Heart left ventricle (tissue), 16 donors: ENCODE measurements at regions of chr10 and their contacts with region 1.

Region 1: DNA sequence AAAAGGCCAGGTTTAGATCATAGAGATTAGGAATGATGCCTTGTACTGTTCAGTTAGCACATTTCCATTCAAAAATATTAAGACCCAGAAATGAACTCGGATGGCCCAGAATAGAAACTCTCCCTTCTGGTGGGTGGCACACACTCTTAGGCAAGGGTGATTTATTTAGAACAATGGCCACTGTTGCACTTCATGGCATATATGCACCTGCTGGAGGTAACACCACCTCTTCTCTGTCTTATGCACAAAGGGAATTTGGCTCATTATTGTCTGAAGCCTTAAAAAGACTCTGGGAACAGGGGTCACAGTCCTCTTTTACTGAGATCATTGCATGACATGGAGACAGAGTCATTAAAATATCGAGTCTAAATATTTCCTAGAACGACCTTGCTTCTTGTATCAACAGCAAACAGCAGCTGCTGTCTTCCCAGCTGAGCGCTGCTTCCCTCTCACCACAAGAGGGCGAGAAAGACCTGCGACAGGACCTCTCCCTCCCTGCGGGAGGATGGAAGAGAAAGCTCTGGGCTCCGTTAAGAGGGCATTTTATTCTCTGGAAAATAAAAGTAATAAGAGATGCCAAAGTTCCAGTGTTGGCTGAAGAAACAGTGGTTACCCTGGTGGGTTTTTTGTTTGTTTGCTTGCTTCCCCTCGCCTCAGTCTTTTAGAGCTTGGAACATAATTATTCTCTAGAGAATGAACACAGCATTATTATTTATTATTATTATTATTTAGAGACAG is 13.6 kb upstream of the BAMBI start:
- DNase-seq: peak; percentile 70 to 81 (median 74)
- ATAC-seq: peak; percentile 66 to 93 (median 88)
- H3K4me3 ChIP-seq: no peak overlapping the region
- H3K27ac ChIP-seq: no peak overlapping the region
- H3K4me1 ChIP-seq: peaks cover 0 to 16% (median 3%) of the 10 kb centered on the region in 12 donors
- H3K27me3 ChIP-seq: peaks cover 0 to 20% (median 0%) of the 10 kb centered on the region in 9 donors
- CTCF ChIP-seq: peak; percentile 86 to 98 (median 96)
- POLR2A ChIP-seq: no peak

Region 2: GRCh38 chr10:28250782-28251181 is 413.0 kb before region 1 on chr10:
- intact Hi-C with region 1: no loop called
- DNase-seq: no peak
- ATAC-seq: peak in 2 of 4 donors; percentile 40 to 42
- H3K4me3 ChIP-seq: no peak overlapping the region
- H3K27ac ChIP-seq: no peak overlapping the region
- H3K4me1 ChIP-seq: peaks cover 0 to 25% (median 1%) of the 10 kb centered on the region in 12 donors
- H3K27me3 ChIP-seq: peaks cover 0 to 4% (median 0%) of the 10 kb centered on the region in 9 donors
- CTCF ChIP-seq: peak; percentile 32 to 69 (median 59)
- POLR2A ChIP-seq: no peak

Region 3: DNA sequence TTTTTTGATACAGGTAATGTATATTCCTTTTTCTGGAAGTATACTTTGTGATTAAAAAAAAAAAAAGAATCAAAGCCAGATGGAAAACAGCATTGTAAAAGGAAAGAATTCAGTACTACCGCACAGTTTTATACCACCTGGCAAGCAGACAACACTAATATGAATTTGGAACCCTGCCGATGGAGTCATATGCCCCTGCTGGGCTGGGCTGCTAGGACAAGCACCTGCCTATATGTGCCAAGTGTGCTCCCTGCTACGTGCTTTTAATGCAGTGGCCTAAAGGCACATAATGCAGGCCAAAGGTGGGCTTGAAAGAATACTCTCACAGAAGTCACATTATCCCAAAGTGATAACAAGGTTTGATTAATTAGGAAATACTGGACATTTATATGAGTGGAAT is 160.6 kb before region 1 on chr10:
- intact Hi-C with region 1: no loop called
- DNase-seq: peak in 3 of 5 donors; percentile 22 to 33 (median 30)
- ATAC-seq: peak in 2 of 4 donors; percentile 73 to 76
- H3K4me3 ChIP-seq: peak overlapping the region in 1 of 12 donors; percentile 0
- H3K27ac ChIP-seq: no peak overlapping the region
- H3K4me1 ChIP-seq: peaks cover 0 to 12% (median 0%) of the 10 kb centered on the region in 12 donors
- H3K27me3 ChIP-seq: no peaks in the 10 kb centered on the region
- CTCF ChIP-seq: peak in 1 of 12 donors; percentile 9
- POLR2A ChIP-seq: no peak

Region 4: DNA sequence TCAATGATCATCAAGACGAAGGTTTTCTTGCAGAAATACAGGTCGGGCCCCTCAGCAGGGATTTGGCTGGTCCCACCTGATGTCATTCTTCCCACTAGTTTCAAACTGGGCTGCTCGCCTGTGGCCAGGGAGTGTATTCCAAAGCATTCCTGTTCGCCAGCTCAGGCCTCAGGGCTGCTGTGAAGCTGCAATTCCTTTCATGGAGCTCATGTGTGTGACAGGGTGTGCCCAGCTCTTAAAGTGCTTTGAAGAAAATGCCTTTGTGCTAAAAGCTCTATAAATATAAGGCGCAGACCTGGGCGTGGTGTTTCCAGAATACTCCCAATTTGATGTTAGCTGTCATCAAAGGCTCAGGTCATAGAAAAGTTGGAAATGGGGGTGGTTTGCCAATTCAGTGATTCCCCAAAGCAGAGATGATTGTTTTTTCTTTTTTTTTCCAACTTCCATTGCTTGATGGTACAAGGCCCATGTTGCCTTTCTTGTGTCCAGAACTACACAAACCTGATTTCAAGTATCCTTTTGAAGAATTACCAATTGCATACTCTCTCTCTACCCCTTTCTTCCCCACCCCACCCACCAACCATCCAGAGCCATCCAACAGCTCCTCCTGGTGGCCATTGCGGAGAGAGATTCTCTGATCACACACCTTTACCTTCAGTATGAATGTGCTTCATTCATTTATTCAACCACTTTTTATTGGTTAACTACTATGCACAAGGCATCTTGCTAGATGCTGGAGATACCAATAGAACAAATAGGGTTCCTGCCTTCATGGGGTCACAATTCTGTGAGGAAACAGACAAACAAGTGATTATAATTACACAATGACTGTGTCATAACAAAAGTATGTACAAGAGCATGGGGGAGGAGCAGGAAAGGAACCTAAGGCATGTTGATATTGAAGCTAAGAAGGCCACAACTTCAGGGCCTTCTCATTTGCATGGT is 327.9 kb after region 1 on chr10:
- intact Hi-C with region 1: loop called in 7 of 10 experiments (anchors 1 to 5 kb)
- DNase-seq: peak in 4 of 5 donors; percentile 24 to 42 (median 38)
- ATAC-seq: peak; percentile 66 to 90 (median 88)
- H3K4me3 ChIP-seq: no peak overlapping the region
- H3K27ac ChIP-seq: peak overlapping the region in 3 of 12 donors; percentile 17 to 71 (median 39)
- H3K4me1 ChIP-seq: peaks cover 0 to 7% (median 0%) of the 10 kb centered on the region in 12 donors
- H3K27me3 ChIP-seq: no peaks in the 10 kb centered on the region
- CTCF ChIP-seq: peak; percentile 59 to 78 (median 68)
- POLR2A ChIP-seq: no peak

Region 5: GRCh38 chr10:29120237-29120636 is 456.5 kb after region 1 on chr10:
- intact Hi-C with region 1: loop called in 2 of 10 experiments (anchors 10 kb)
- DNase-seq: no peak
- ATAC-seq: no peak
- H3K4me3 ChIP-seq: no peak overlapping the region
- H3K27ac ChIP-seq: no peak overlapping the region
- H3K4me1 ChIP-seq: no peaks in the 10 kb centered on the region
- H3K27me3 ChIP-seq: no peaks in the 10 kb centered on the region
- CTCF ChIP-seq: no peak
- POLR2A ChIP-seq: no peak

Region 6: DNA sequence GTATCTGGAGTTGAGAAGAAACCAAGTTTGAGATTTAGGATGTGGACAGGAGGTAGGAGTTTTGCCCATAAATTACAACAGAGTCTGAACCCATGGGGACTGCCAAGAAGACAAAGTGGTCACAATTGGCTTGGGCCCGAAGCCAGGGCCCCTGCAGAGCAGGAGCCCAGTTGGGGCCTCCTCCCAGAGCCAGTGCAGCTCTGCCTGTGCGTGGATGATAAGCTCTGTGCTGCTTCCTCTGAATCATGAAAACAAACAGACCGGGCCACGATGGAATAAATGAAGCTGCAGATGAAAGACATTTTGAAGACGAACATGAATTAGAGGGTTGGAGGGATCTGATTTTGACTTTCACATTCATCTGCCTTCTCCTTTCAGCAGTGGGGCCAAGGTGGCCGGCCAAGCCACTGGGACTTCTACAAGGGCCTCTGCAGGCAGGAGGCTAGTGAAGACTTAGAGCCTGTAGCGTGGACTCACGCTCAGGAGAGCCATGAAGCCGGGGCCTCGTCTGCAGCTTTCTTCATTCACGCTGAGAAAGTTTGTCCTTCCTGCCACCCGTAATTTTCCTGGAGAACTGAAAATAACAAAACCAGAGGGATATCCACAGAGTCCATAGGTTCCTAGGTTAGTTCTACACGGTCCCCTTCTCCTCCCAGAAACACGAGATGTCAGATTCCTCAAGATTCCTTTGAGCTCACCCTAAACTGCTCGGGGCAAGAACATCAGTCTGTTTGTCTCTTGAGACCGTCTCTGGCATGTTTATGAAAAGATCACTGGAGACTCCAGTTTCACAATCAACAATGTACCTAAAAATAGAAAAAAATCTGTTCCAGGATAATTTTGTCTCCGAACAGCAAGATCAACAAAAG is 468.4 kb after region 1 on chr10:
- intact Hi-C with region 1: loop called in 8 of 10 experiments (anchors 2 to 10 kb)
- DNase-seq: peak in 4 of 5 donors; percentile 16 to 64 (median 38)
- ATAC-seq: peak; percentile 23 to 86 (median 74)
- H3K4me3 ChIP-seq: no peak overlapping the region
- H3K27ac ChIP-seq: peak overlapping the region in 6 of 12 donors; percentile 8 to 31 (median 18)
- H3K4me1 ChIP-seq: peaks cover 0 to 17% (median 4%) of the 10 kb centered on the region in 12 donors
- H3K27me3 ChIP-seq: peaks cover 0 to under 1% (median 0%) of the 10 kb centered on the region in 9 donors
- CTCF ChIP-seq: no peak
- POLR2A ChIP-seq: no peak

Region 7: DNA sequence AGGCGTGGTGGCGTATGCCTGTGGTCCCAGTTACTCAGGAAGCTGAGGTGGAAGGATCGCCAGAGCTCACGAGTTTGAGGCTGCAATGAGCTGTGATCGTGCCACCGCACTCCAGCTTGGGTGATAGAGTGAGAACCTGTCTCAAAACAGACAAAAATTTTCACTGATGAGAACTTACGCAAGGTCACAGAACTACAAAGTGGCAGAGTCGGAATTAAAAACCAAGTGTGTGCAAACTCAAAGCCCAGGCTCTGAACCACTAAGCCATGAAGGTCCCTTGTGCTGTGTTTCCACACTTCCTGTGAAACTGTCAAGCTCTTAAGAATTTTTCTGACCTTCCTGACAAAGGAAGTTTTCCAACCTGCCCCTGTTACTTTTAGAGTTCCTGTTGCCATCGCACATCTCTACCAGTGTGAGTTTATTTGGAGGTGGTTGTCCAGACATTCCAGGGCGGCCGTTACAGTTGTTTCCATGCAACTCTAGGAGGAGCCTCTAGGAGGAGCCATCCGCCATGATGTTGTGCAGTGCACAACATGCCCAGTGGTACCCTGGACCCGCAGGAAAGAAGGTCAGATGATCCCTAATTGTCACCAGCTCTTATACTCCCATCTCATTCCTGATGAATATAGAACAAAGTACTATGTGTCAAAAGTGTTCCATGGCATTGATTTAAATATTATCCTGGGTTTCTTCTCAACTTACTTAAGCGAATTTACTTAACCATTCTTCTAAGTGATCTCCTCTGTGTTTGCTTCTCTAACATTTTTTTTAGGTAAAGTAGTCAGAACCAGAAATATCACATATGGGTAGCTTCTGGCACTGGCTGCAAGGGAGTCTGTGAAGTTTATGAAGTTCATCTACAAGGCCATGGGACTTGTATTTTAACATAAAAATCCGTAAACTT is 576.1 kb after region 1 on chr10:
- intact Hi-C with region 1: loop called in 1 of 10 experiments (anchors 5 kb)
- DNase-seq: peak in 1 of 5 donors; percentile 31
- ATAC-seq: peak in 2 of 4 donors; percentile 42 to 60
- H3K4me3 ChIP-seq: no peak overlapping the region
- H3K27ac ChIP-seq: no peak overlapping the region
- H3K4me1 ChIP-seq: no peaks in the 10 kb centered on the region
- H3K27me3 ChIP-seq: no peaks in the 10 kb centered on the region
- CTCF ChIP-seq: peak; percentile 18 to 52 (median 34)
- POLR2A ChIP-seq: no peak